ENCODE measurements at regions of chr15 and their contacts with region 1.

Region 1: DNA sequence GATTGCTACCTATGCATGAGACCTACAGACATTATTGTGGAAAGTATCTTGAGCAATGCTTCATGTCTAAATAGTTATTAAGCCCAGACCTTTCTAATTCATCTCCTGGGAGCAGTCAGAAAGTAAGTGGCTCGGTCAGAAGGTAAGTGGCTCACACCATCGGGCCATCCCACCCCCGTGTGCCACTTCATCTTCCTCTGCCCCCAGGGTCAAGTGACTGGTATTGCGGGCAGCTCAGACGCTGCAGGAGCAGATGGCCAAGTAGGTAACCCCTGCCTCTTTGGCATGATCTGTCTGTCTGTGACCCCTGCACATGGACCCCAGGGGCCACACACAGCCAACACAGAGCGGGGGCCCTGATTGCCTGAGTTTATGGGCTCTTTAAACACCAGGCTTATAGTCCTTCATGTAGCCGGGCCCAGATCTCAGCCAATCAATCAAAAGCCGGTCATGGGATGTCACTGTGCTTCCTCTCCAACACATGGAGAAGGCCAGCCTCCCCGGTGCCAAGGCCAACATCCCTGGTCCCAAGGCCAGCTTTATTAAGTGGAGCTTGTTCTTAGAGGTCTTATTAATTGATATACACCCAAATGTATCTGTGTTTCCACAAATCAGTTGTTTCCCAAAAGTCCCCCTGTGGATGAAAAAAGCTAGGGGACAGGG is 42.9 kb downstream of the LARP6 start:
- DNase-seq: no peak
- H3K4me3 ChIP-seq: no peak overlapping the region
- H3K27ac ChIP-seq: no peak overlapping the region
- H3K27me3 ChIP-seq: no peaks in the 10 kb centered on the region
- CTCF ChIP-seq: no peak

Region 2: DNA sequence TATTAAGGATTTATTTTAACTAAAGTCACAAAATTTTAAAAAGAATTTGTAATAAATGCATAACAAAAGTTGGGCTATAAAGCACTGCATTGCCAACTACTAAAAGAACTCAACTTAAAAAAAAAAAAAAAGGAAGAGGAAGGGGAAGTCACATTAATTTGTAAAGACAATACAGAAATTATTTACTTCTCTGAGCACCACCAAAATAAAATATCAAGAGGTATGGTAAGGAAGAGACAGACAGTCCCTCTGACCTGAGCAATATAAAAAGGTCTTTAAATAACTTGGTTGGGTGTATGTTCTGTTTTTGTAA is 131.2 kb before region 1 on chr15:
- CTCF ChIA-PET with region 1: interaction called, 127 read pairs
- POLR2A ChIA-PET with region 1: interaction called, 3 read pairs
- DNase-seq: no peak
- H3K4me3 ChIP-seq: no peak overlapping the region
- H3K27ac ChIP-seq: no peak overlapping the region
- H3K27me3 ChIP-seq: no peaks in the 10 kb centered on the region
- CTCF ChIP-seq: no peak

Region 3: GRCh38 chr15:70722266-70723121 is 88.6 kb before region 1 on chr15:
- CTCF ChIA-PET with region 1: interaction called, 51 read pairs
- POLR2A ChIA-PET with region 1: no interaction called
- DNase-seq: peak; percentile 43
- H3K4me3 ChIP-seq: no peak overlapping the region
- H3K27ac ChIP-seq: no peak overlapping the region
- H3K27me3 ChIP-seq: no peaks in the 10 kb centered on the region
- CTCF ChIP-seq: peak; percentile 71

Region 4: DNA sequence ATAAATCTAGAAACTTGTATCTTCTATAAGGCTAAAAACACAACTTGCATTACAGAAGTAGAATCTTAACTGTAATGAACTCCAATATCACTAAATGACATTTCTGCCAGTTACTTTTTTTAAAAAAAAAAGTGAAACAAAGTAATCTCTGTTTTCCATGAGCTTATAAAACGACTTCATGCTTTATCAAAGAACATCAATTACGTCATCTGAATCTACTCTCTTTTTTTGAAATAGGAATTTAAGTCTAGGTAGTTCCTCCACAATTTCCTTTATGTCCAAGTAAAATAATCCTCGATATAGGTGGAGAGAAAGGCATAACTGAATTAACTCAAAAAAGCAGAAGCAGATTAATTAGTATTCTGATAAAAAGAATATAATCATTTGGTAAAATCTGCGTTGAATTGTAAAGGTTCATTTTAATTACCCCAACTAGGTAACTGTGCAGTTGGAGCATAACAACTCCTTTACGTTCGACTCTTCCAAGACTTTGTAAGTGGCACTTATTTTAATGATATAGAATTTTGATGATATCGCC is 49.0 kb before region 1 on chr15:
- CTCF ChIA-PET with region 1: interaction called, 11 read pairs
- POLR2A ChIA-PET with region 1: no interaction called
- DNase-seq: no peak
- H3K4me3 ChIP-seq: peak overlapping the region; percentile 85
- H3K27ac ChIP-seq: no peak overlapping the region
- H3K27me3 ChIP-seq: no peaks in the 10 kb centered on the region
- CTCF ChIP-seq: no peak

Region 5: DNA sequence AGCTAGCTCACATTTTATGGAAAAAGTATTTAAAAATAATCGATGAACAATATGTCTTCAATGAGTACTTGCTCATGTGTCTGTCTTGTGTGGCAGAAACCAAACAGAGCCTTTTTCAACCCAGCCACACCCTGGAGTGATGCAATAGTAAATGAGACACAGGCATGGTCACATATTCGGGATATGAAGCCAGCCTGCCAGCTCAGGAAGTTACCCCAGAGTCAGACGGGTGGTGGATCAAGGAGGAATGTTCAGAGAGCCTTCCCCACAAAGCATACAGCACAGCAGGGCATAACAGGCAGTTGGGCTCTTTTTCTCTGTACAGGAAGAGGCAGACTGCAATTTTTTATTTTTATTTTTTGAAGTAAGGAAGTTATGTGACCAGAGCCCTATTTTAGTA is 15.6 kb after region 1 on chr15:
- CTCF ChIA-PET with region 1: interaction called, 26 read pairs
- POLR2A ChIA-PET with region 1: no interaction called
- DNase-seq: no peak
- H3K4me3 ChIP-seq: no peak overlapping the region
- H3K27ac ChIP-seq: no peak overlapping the region
- H3K27me3 ChIP-seq: no peaks in the 10 kb centered on the region
- CTCF ChIP-seq: no peak

Region 6: DNA sequence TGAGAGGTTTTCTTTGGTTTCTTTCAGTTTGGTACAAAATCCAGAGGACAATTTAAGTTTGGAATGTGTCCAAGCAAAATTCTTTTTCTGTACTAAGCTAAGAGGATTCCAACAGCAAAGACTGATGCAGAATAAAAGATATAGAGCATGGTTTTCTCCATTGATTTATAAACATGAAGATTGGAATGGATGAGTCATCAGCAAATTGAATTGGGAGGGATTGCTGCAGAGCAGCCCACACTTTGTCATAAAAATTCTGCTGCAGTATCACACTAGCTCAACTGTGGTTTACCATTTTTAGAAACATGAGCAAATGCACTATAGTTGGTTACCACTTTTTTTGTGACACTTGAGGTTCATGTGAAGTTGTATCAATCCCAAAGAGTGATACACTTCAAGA is 59.0 kb after region 1 on chr15:
- CTCF ChIA-PET with region 1: interaction called, 18 read pairs
- POLR2A ChIA-PET with region 1: no interaction called
- DNase-seq: no peak
- H3K4me3 ChIP-seq: no peak overlapping the region
- H3K27ac ChIP-seq: no peak overlapping the region
- H3K27me3 ChIP-seq: no peaks in the 10 kb centered on the region
- CTCF ChIP-seq: no peak

Region 7: GRCh38 chr15:71508081-71508682 is 697.1 kb after region 1 on chr15:
- CTCF ChIA-PET with region 1: no interaction called
- POLR2A ChIA-PET with region 1: no interaction called
- DNase-seq: no peak
- H3K4me3 ChIP-seq: no peak overlapping the region
- H3K27ac ChIP-seq: no peak overlapping the region
- H3K27me3 ChIP-seq: no peaks in the 10 kb centered on the region
- CTCF ChIP-seq: no peak

Measured in AG04450 (cell line).